Heart left ventricle (tissue), 16 donors: ENCODE measurements at regions of chr13 and their contacts with region 1.

Region 1: DNA sequence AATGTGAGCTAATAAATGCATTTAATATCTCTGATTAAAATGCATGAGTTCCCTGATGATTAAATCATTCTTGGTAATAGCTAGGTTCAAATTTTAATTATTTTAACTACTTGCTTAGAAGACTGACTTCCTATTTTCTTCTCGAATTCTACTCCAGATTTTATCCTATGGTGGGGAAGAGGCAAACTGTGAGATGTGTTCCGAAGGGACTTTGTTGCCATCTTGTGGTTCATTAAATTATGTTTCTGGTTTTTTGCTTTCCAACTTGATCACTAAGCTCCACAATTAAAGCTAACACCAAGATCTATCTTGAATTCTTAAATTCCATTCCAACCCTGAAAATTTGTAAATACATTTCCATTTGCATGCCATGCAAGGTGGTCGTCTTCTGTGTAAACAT is 538.4 kb upstream of the PCDH20 start:
- DNase-seq: no peak
- ATAC-seq: no peak
- H3K4me3 ChIP-seq: no peak overlapping the region
- H3K27ac ChIP-seq: no peak overlapping the region
- H3K4me1 ChIP-seq: no peaks in the 10 kb centered on the region
- H3K27me3 ChIP-seq: no peaks in the 10 kb centered on the region
- CTCF ChIP-seq: peak in 8 of 12 donors; percentile 6 to 48 (median 36)
- POLR2A ChIP-seq: no peak

Region 2: GRCh38 chr13:60453490-60453889 is 1500.6 kb before region 1 on chr13:
- intact Hi-C with region 1: loop called in 1 of 10 experiments (anchors 10 kb)
- DNase-seq: no peak
- ATAC-seq: no peak
- H3K4me3 ChIP-seq: no peak overlapping the region
- H3K27ac ChIP-seq: no peak overlapping the region
- H3K4me1 ChIP-seq: no peaks in the 10 kb centered on the region
- H3K27me3 ChIP-seq: no peaks in the 10 kb centered on the region
- CTCF ChIP-seq: no peak
- POLR2A ChIP-seq: no peak

Region 3: GRCh38 chr13:60627071-60627686 is 1326.9 kb before region 1 on chr13:
- intact Hi-C with region 1: loop called in 2 of 10 experiments (anchors 5 kb)
- DNase-seq: no peak
- ATAC-seq: peak in 2 of 4 donors; percentile 44
- H3K4me3 ChIP-seq: no peak overlapping the region
- H3K27ac ChIP-seq: no peak overlapping the region
- H3K4me1 ChIP-seq: no peaks in the 10 kb centered on the region
- H3K27me3 ChIP-seq: peaks cover 0 to 15% (median 0%) of the 10 kb centered on the region in 9 donors
- CTCF ChIP-seq: peak; percentile 15 to 56 (median 42)
- POLR2A ChIP-seq: no peak